Right ventricle myocardium inferior (tissue), 1 donor: ENCODE measurements at regions of chr20 and their contacts with region 1.

Region 1: GRCh38 chr20:19661717-19662636 is 96.1 kb upstream of the RIN2 start:
- DNase-seq: no peak
- ATAC-seq: peak; percentile 70

Region 2: GRCh38 chr20:18632196-18633009 is 1029.6 kb before region 1 on chr20:
- intact Hi-C with region 1: loop called (anchors 5 kb)
- DNase-seq: peak; percentile 74
- ATAC-seq: peak; percentile 88

Region 3: GRCh38 chr20:19205977-19206396 is 456.0 kb before region 1 on chr20:
- intact Hi-C with region 1: loop called (anchors 2 kb)
- DNase-seq: peak; percentile 89
- ATAC-seq: peak; percentile 31

Region 4: DNA sequence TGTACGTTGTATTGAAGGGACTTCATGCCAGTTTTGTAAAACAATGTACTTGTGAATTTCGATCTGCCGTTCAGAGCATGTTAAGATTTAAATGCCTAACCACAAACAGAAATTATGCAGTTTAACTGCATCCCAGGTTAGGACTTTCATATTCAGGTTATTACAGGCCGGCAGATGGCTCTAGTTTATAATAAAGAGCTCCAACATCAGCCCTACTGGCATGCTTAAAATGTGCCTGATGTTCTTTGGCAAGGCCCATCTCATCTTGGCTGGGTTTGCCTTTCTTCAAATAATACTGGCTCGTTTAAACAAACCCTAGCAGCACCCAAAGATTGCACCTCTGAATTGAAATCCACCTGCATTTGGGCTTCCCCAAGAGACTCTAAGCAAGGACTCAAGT is 73.2 kb before region 1 on chr20:
- intact Hi-C with region 1: loop called (anchors 5 kb)
- DNase-seq: no peak
- ATAC-seq: peak; percentile 43

Region 5: GRCh38 chr20:19628570-19629169 is 33.3 kb before region 1 on chr20:
- intact Hi-C with region 1: loop called (anchors 5 kb)
- DNase-seq: no peak
- ATAC-seq: no peak